K562 (cell line): ENCODE measurements at regions of chr5 and their contacts with region 1.

Region 1: GRCh38 chr5:1204693-1205242 is 3.4 kb downstream of the SLC6A19 start:
- DNase-seq: peak; percentile 57 to 73 (median 64)
- ATAC-seq: peak; percentile 59
- H3K4me3 ChIP-seq: no peak overlapping the region
- H3K27ac ChIP-seq: no peak overlapping the region
- H3K4me1 ChIP-seq: peaks cover 25 to 81% of the 10 kb centered on the region in 2 experiments
- H3K27me3 ChIP-seq: peaks cover 0 to 38% of the 10 kb centered on the region in 2 experiments; a peak in 4 of 5 replicates
- CTCF ChIP-seq: peak; percentile 77 to 91 (median 83)
- EP300 ChIP-seq: no peak; the same call in 1 of the 2 replicates
- POLR2A ChIP-seq: no peak
- RAD21 ChIP-seq: peak; percentile 75 to 87

Region 2: GRCh38 chr5:1174122-1174936 is 30.4 kb before region 1 on chr5:
- CTCF ChIA-PET with region 1: interaction called, 25 read pairs
- POLR2A ChIA-PET with region 1: interaction called, 3 read pairs
- in situ Hi-C with region 1: loop called (anchors 5 kb)
- intact Hi-C with region 1: no loop called
- DNase-seq: peak; percentile 72 to 85 (median 82)
- ATAC-seq: peak; percentile 77
- H3K4me3 ChIP-seq: no peak overlapping the region
- H3K27ac ChIP-seq: no peak overlapping the region
- H3K4me1 ChIP-seq: peaks cover 6 to 48% of the 10 kb centered on the region in 2 experiments; a peak in 4 of 5 replicates
- H3K27me3 ChIP-seq: peaks cover 8 to 26% of the 10 kb centered on the region in 2 experiments
- CTCF ChIP-seq: peak; percentile 97 to 98 (median 98)
- EP300 ChIP-seq: peak; percentile 53
- POLR2A ChIP-seq: no peak
- RAD21 ChIP-seq: peak; percentile 82 to 84

Region 3: GRCh38 chr5:1349246-1349645 is 144.5 kb after region 1 on chr5:
- CTCF ChIA-PET with region 1: no interaction called
- POLR2A ChIA-PET with region 1: no interaction called
- in situ Hi-C with region 1: no loop called
- intact Hi-C with region 1: no loop called
- DNase-seq: peak in 1 of 4 experiments; percentile 36
- ATAC-seq: no peak
- H3K4me3 ChIP-seq: no peak overlapping the region
- H3K27ac ChIP-seq: no peak overlapping the region
- H3K4me1 ChIP-seq: peaks cover 7 to 29% of the 10 kb centered on the region in 2 experiments; a peak in 4 of 5 replicates
- H3K27me3 ChIP-seq: peaks cover 14 to 22% of the 10 kb centered on the region in 2 experiments; a peak in 4 of 5 replicates
- CTCF ChIP-seq: no peak
- EP300 ChIP-seq: no peak
- POLR2A ChIP-seq: no peak
- RAD21 ChIP-seq: no peak